Activated T-helper 2 cell treated with anti-CD3 and anti-CD28 coated beads, Interferon-gamma antibody, Interleukin-2, Interleukin-4, amounts not matched to agents 10 μg/mL and 5 μg/mL and 100 μg/mL, durations not matched to agents 14 hours and 24 hours and 36 hours (primary cell): ENCODE measurements at regions of chr5 and their contacts with region 1.

Region 1: DNA sequence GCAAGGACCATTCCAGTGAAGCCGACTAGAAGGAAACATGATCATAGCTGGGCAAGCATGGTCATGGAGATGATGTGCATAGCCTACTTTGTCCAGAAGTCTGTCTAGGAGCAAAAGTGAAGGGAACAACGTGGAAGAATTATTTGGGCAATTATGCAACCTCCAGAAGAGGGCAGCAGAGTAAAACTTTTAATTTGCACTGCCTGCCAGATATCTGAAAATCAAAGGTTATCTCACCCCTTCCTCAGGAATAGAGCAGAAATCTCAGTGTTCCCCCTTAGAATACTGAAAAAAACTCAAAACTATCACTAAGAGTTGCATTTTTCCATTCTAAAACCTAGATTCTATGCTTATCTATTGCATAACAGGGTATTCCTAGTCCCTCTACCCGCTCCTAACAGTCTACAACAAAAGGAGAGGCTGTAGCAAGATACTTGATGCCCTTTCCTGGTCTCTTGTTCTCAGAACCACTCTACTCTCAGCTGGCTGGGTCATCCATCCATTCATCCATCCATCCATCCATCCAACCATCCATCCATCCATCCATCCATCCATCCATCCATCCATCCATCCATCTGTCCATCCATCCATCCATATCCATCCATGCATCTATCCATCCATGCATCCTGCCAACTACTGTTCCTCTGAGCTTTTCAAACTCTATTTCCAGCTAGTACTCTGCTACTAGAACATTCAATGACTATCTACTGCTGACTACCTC is 8.4 kb upstream of the SETD9 start:
- DNase-seq: no peak
- H3K4me3 Mint-ChIP-seq: no peak overlapping the region
- H3K27ac Mint-ChIP-seq: no peak overlapping the region
- H3K4me1 Mint-ChIP-seq: peaks cover 2% of the 10 kb centered on the region
- H3K27me3 Mint-ChIP-seq: peaks cover 14% of the 10 kb centered on the region

Region 2: GRCh38 chr5:57221049-57221568 is 320.1 kb after region 1 on chr5:
- intact Hi-C with region 1: loop called (anchors 1 kb)
- DNase-seq: no peak
- H3K4me3 Mint-ChIP-seq: no peak overlapping the region
- H3K27ac Mint-ChIP-seq: peak overlapping the region; percentile 2
- H3K4me1 Mint-ChIP-seq: peaks cover 18% of the 10 kb centered on the region
- H3K27me3 Mint-ChIP-seq: no peaks in the 10 kb centered on the region

Region 3: GRCh38 chr5:57277085-57277484 is 376.1 kb after region 1 on chr5:
- intact Hi-C with region 1: loop called (anchors 2 kb)
- DNase-seq: no peak
- H3K4me3 Mint-ChIP-seq: no peak overlapping the region
- H3K27ac Mint-ChIP-seq: no peak overlapping the region
- H3K4me1 Mint-ChIP-seq: no peaks in the 10 kb centered on the region
- H3K27me3 Mint-ChIP-seq: peaks cover 6% of the 10 kb centered on the region